PC-3 (cell line): ENCODE measurements at regions of chr13 and their contacts with region 1.

Region 1: DNA sequence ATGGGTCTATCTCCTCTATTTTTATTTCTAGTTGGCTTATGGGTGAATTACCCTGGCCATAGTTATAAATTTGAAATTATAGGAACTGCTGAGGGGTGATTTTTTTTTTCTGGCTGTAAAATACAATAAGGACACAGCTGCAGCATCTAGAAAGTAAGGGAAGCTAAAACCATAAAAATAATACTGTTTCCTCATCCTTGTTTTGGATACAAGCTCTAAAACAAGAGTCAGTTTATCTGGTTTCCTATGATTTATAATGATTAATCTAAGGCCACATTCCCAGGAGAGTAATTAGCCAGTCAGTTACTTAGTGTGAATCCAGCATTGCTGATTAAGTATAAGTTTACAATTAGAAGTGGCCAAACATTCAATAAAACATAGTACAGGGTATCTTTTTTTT is 219.1 kb upstream of the NBEA start:
- DNase-seq: no peak
- ATAC-seq: no peak; the same call in 1 of the 2 replicates
- H3K4me3 ChIP-seq: no peak overlapping the region
- H3K27ac ChIP-seq: peak overlapping the region; percentile 57
- H3K4me1 ChIP-seq: peaks cover 36% of the 10 kb centered on the region
- H3K27me3 ChIP-seq: no peaks in the 10 kb centered on the region
- CTCF ChIP-seq: no peak

Region 2: DNA sequence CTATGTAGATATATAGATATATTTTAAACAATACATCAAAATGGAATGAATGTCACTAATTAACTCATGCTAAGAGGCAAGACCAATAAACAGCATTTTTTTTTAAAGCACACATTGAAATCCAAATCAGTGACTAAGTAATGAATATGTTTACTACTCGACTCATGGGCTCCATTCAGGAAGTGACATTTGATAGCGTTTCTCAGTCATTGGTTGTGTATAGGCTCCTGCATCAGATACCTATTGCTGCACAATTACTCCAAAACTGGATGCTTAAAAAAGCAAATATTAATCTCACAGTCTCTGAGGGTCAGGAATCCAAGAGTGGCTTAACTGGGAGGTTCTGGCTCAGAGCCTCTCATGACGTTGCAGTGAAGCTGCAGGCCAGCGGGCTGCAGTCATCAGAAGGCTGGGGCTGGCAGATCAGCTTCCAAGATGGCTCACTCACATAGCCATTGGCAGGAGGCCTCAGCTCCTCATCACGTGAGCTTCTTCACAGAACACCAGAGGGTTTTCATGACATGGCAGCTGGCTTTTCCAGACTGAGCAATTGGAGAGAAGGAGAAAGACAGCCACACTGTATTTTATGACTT is 306.0 kb before region 1 on chr13:
- CTCF ChIA-PET with region 1: no interaction called
- POLR2A ChIA-PET with region 1: no interaction called
- intact Hi-C with region 1: loop called (anchors 5 kb)
- DNase-seq: peak; percentile 67
- ATAC-seq: peak; percentile 56
- H3K4me3 ChIP-seq: no peak overlapping the region
- H3K27ac ChIP-seq: peak overlapping the region; percentile 79
- H3K4me1 ChIP-seq: peaks cover 36% of the 10 kb centered on the region
- H3K27me3 ChIP-seq: no peaks in the 10 kb centered on the region
- CTCF ChIP-seq: no peak

Region 3: DNA sequence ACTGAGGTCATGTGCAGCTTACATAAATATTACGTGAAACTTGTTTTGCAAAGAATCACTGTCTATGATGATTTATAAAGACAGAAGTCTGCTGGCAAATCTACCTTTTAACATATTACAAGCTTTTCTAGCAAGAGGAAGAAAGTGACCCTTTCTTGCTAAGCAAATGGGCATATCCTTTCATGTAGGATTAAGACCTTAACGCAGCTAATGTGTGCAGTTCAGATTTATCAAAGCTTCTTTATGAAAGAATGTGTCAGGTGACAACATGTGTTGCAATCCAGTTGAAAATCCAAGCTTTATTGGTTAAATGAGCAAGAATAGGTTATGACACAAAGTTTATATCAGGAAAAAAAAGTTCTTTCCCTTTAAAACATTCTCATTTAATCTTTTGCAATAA is 103.5 kb after region 1 on chr13:
- CTCF ChIA-PET with region 1: no interaction called
- POLR2A ChIA-PET with region 1: no interaction called
- intact Hi-C with region 1: loop called (anchors 5 kb)
- DNase-seq: no peak
- ATAC-seq: no peak
- H3K4me3 ChIP-seq: no peak overlapping the region
- H3K27ac ChIP-seq: no peak overlapping the region
- H3K4me1 ChIP-seq: no peaks in the 10 kb centered on the region
- H3K27me3 ChIP-seq: no peaks in the 10 kb centered on the region
- CTCF ChIP-seq: no peak

Region 4: DNA sequence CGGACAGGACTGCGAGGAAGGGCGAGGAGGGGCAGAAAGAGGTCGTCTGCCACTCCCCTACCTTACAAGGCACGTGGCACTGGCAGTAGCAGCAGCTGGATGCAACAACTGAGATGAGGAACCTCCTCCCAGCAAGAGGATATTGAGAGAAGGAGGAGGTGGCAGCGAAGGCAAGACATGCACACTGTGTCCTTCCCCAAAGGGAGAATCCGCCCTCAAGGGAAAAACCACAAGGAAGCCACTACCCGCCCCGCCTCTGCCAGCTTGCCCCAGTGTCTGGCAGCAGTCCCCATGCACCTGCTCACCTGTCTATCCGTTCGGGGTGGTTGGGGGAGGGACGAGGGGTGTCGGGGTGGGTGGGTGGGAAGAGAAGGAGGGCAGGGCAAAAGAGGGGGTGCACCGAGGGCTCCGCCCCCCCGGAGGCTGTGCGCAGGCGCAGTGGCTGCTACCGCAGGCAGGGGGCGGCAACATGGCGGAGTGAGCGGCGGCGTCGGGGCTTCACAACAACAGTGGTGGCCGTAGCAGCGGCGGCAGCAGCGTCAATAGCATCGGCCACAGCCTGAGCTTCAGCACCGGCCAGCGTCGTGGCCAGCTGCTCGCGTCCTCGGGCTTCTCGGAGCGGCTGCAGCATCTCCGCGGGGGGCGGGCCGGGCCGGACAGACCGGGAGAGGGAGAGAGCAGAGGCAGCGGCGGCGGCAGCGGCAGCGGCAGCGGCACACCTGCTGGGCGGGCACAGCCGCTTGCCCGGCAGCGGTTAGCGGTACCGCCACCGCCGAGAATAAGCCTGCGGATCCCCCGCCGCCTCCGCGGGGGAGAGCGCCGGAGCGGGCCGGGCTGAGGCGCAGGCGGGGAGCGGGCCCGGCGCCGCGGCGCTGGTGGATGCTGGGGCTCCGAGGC is 219.2 kb after region 1 on chr13 and contains the start of gene NBEA:
- CTCF ChIA-PET with region 1: no interaction called
- POLR2A ChIA-PET with region 1: no interaction called
- intact Hi-C with region 1: loop called (anchors 5 kb)
- DNase-seq: peak; percentile 74
- ATAC-seq: peak; percentile 68
- H3K4me3 ChIP-seq: peak within 1 kb of the TSS; percentile 92
- H3K27ac ChIP-seq: no peak within 1 kb of the TSS
- H3K4me1 ChIP-seq: peaks cover 24% of the 10 kb centered on the region
- H3K27me3 ChIP-seq: no peaks in the 10 kb centered on the region
- CTCF ChIP-seq: no peak
- total RNA-seq, gene NBEA: 4.4 and 6.2 TPM in 2 replicates

Region 5: GRCh38 chr13:35107535-35107934 is 384.6 kb after region 1 on chr13:
- CTCF ChIA-PET with region 1: no interaction called
- POLR2A ChIA-PET with region 1: no interaction called
- intact Hi-C with region 1: loop called (anchors 1 kb)
- DNase-seq: peak; percentile 43
- ATAC-seq: peak; percentile 64
- H3K4me3 ChIP-seq: no peak overlapping the region
- H3K27ac ChIP-seq: no peak overlapping the region
- H3K4me1 ChIP-seq: peaks cover 28% of the 10 kb centered on the region
- H3K27me3 ChIP-seq: no peaks in the 10 kb centered on the region
- CTCF ChIP-seq: no peak

Region 6: GRCh38 chr13:35165205-35165604 is 442.3 kb after region 1 on chr13:
- CTCF ChIA-PET with region 1: no interaction called
- POLR2A ChIA-PET with region 1: no interaction called
- intact Hi-C with region 1: no loop called
- DNase-seq: no peak
- ATAC-seq: no peak
- H3K4me3 ChIP-seq: no peak overlapping the region
- H3K27ac ChIP-seq: no peak overlapping the region
- H3K4me1 ChIP-seq: no peaks in the 10 kb centered on the region
- H3K27me3 ChIP-seq: no peaks in the 10 kb centered on the region
- CTCF ChIP-seq: no peak